Left colon (tissue), 2 donors: ENCODE measurements at regions of chr6 and their contacts with region 1.

Region 1: DNA sequence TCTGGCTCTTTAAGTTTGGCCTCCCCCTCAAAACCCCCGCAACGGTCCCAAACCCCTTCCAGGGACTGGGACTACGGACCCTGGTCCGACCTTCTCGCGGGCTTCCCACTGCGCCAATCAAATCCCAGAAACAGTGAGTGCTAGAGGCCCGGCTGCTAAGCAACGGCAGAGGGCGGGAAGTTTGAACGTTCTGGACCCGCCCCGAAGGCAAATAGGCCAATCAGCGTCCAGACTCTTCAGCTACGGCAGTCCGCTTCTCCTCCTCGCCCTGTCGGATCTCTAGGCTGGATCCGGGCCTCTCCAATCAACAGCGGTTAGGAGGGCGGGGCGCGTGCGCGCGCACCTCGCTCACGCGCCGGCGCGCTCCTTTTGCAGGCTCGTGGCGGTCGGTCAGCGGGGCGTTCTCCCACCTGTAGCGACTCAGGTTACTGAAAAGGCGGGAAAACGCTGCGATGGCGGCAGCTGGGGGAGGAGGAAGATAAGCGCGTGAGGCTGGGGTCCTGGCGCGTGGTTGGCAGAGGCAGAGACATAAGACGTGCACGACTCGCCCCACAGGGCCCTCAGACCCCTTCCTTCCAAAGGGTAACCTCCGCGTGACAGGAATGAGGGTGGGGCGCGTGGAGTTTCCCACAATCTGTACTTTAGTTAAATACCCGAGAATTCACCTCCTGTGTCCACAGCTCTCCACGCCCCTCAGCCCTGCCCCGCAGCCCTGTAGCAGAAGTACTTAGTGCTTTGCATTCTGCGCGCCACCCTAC is at the start of gene MSH5:
- DNase-seq: peak; percentile 97 to 99
- ATAC-seq: peak; percentile 67
- total RNA-seq, gene MSH5: 18.7 to 26.9 TPM

Region 2: DNA sequence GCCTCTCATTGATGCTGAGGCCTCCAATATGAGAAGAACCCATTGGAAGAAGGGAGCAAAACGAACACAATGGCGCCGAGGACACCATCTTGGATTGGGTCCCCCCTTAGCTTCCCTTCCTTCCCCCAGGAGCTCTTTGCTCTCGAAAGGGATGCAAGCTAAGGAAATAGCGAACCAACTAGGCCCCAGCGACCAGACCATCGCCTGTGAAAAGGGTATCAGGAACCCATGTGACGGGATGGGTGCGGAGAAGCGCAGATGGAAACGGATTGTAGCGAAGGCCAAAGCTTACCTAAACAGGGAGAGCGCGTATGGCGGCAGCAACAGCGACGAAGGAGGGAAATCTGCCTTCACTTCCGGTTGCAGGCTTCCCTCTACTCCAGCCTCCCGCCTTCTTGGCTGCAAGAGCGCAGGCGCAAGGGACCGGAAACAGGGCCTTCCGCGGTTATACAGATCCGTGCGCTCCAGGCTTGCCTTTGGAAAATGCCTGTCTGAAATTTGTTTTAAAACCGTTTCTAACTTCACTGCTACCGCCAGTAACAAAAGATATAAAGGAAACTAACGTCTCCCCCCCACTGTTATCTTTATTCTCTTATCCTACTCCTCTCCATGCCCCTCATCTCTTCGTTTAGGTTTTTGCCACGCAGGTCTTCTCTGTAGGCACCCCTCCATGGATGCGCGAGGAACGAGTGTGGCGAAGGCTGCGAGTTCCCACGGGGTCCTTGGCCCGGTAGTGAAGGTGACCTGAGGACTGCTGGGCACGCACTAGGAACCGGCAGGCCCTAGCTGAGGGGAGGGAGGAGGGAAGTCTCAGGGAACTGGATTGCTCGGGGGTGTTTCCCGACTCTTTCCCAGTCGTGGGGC is 197.9 kb before region 1 on chr6 and contains the start of gene DDX39B:
- intact Hi-C with region 1: no loop called
- DNase-seq: peak; percentile 94 to 97
- ATAC-seq: peak; percentile 85
- total RNA-seq, gene DDX39B: 221 to 269 TPM

Region 3: GRCh38 chr6:31784098-31784925 is 44.5 kb after region 1 on chr6:
- intact Hi-C with region 1: no loop called
- DNase-seq: no peak
- ATAC-seq: no peak

Region 4: DNA sequence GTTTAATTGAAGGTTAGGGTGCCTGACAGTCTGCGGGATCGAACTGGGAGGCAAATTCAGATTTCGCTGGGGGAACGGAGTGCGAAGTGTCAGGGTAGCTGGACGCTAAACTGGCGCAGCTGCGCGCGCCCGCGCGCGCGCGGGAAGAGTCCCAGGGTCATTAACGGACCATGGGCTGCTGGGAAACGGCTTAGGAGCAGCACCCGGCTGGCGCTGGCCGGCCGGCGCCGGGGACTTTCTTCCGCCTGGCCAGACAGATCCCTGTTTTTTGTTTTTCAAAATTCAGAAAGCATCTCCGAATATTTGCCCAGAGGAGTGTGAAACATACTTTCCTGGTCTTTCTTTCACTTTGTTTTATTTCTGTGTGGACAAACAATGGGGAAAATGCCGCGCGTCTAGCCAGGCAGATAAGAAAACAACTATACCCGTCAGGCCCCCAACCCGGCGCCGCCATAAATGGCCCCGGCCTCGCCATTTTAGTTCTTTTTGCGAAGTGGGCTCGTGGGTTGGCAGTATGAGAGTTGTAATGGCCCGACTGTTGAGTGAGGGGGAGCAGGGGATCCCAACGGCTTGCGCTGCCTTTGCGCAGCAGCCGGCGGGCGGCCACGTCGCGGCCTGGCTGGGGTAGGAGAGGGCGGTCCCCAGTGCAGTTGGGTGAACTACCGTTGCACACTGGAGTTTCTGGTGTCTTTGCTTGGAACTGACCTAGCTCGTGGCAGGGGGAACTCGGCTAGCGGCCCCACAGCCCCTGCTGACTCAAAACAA is 94.8 kb after region 1 on chr6:
- intact Hi-C with region 1: loop called in 1 of 2 experiments (anchors 5 kb)
- DNase-seq: peak; percentile 90
- ATAC-seq: peak; percentile 73